ENCODE measurements at regions of chr7 and their contacts with region 1.

Region 1: DNA sequence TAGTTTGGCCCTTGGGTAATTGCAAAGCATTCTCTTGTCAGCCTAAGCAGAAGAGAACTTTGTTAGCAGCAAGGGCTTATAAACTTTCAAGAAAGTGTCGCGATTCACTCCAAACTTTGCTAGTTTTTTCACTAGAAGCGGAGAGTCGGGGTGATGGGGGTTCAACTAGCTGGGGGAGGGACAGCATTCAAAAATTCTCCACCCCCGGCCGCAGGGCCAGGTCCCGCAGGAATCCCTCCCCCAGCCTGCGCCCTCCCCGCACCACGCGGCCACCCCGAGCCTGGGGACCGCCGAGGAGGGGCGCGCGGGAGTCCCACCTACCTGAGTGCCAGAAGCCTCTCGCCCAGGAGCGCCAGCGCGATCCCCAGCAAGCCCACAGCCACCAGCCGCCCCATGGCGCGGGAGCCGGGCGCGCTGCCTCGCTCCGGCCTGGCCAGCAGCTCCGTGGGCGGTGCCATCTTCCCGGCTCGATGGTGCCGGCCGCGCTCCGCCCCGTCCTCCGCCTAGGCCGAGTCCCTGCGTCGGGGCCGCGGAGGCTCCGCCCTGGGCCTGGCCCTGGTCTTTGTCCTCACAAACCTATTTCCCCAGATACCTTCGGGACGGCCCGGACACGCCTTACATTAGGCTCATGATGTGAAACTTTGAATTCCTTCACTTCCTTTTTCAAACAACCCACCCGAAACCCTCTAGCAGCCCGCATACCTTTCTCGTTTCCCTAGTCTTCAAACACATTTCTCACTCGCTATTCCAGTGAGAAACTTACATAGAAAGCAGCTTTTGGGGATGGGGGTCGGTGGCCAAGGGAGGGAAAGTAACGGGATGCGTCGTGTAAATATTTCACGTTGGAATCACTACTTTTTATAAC is at the start of gene PON2:
- DNase-seq: peak; percentile 53 to 85
- H3K4me3 ChIP-seq: peak within 1 kb of the TSS; percentile 45 to 93 (median 71)
- H3K27ac ChIP-seq: peak within 1 kb of the TSS; percentile 89
- H3K4me1 ChIP-seq: peaks cover 0 to 4% (median 3%) of the 10 kb centered on the region in 4 experiments; a peak in 5 of 7 replicates
- H3K27me3 ChIP-seq: peaks cover 0 to 1% (median 0%) of the 10 kb centered on the region in 4 experiments; a peak in 1 of 7 replicates
- CTCF ChIP-seq: no peak
- EP300 ChIP-seq: no peak
- POLR2A ChIP-seq: peak; percentile 95 to 96
- RAD21 ChIP-seq: no peak
- total RNA-seq, gene PON2: 27.5 and 31.0 TPM in 2 replicates

Region 2: DNA sequence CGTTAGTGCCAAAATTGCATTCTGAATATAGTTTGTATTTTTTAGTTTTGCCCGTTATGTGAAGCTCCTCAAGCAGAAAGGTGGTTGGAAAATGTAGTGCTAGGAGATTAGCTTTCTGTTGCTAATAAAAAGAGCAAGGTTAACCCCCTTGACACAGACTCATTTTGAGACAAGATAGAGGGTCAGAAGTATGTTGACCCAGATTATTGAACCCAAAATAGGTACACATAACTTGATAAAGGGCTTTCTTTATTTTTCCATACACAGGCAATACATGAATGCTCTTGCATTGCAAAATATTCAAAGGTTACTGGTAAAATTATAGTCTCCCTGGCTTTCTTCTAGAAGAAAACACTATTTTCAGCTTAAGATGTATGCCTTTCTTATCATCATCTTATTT is 10.0 kb after region 1 on chr7:
- CTCF ChIA-PET with region 1: interaction called, 3 read pairs
- POLR2A ChIA-PET with region 1: interaction called, 11 read pairs
- DNase-seq: no peak
- H3K4me3 ChIP-seq: no peak overlapping the region
- H3K27ac ChIP-seq: no peak overlapping the region
- H3K4me1 ChIP-seq: no peaks in the 10 kb centered on the region
- H3K27me3 ChIP-seq: no peaks in the 10 kb centered on the region
- CTCF ChIP-seq: no peak
- EP300 ChIP-seq: no peak
- POLR2A ChIP-seq: no peak
- RAD21 ChIP-seq: no peak

Measured in H1 (cell line).